Heart left ventricle (tissue), 16 donors: ENCODE measurements at regions of chr9 and their contacts with region 1.

Region 1: DNA sequence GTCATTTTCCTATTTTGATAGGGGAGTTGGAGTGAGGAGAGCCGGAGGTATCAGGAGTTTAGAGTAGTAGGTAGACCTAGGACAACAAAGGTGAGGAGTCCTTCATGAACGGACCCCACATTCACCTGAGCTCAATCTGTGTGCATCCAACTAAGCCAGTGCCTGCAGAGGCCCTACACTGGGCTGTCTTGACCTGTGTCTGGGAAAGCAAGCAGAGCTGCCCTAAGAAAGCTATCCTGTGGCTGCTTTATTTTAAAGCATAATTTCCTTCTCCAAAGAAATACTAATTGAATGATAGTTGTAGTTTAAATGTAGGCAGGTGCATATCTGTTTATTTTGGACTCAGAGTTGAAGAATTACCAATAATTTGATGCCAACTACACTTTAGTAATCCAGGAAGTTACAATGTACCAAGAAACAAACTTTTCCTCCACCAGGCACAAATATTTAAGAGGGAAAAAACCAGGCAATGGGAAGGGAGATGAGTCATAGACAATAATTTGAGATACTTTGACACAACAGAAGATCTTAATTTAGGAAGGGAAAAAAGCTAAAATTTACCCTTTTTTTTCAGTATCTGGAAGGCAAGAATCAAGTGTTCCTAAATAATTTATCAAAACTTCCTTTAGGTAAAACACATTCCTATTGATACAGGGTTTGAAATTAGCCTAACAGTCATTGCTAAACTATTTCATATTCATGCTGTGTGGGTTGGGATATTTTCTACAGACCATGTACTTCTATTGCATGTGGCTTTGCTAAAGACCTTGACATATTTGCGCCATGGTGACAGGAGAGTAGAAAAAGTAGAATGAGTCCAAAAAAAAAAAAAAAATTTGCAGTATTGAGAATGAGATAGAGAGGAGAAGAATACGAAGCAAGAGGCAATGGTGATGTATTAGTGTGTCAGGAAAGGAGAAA is 376.6 kb upstream of the TUSC1 start:
- DNase-seq: no peak
- ATAC-seq: no peak
- H3K4me3 ChIP-seq: no peak overlapping the region
- H3K27ac ChIP-seq: no peak overlapping the region
- H3K4me1 ChIP-seq: no peaks in the 10 kb centered on the region
- H3K27me3 ChIP-seq: no peaks in the 10 kb centered on the region
- CTCF ChIP-seq: no peak
- POLR2A ChIP-seq: no peak

Region 2: GRCh38 chr9:25994605-25995004 is 60.3 kb before region 1 on chr9:
- intact Hi-C with region 1: loop called in 1 of 10 experiments (anchors 10 kb)
- DNase-seq: no peak
- ATAC-seq: no peak
- H3K4me3 ChIP-seq: no peak overlapping the region
- H3K27ac ChIP-seq: no peak overlapping the region
- H3K4me1 ChIP-seq: no peaks in the 10 kb centered on the region
- H3K27me3 ChIP-seq: no peaks in the 10 kb centered on the region
- CTCF ChIP-seq: no peak
- POLR2A ChIP-seq: no peak

Region 3: GRCh38 chr9:26033336-26033735 is 21.5 kb before region 1 on chr9:
- intact Hi-C with region 1: no loop called
- DNase-seq: no peak
- ATAC-seq: no peak
- H3K4me3 ChIP-seq: no peak overlapping the region
- H3K27ac ChIP-seq: no peak overlapping the region
- H3K4me1 ChIP-seq: no peaks in the 10 kb centered on the region
- H3K27me3 ChIP-seq: no peaks in the 10 kb centered on the region
- CTCF ChIP-seq: no peak
- POLR2A ChIP-seq: no peak

Region 4: GRCh38 chr9:26112724-26113123 is 57.9 kb after region 1 on chr9:
- intact Hi-C with region 1: loop called in 1 of 10 experiments (anchors 10 kb)
- DNase-seq: no peak
- ATAC-seq: no peak
- H3K4me3 ChIP-seq: no peak overlapping the region
- H3K27ac ChIP-seq: no peak overlapping the region
- H3K4me1 ChIP-seq: no peaks in the 10 kb centered on the region
- H3K27me3 ChIP-seq: no peaks in the 10 kb centered on the region
- CTCF ChIP-seq: no peak
- POLR2A ChIP-seq: no peak